ENCODE measurements at regions of chr1 and their contacts with region 1.

Region 1: DNA sequence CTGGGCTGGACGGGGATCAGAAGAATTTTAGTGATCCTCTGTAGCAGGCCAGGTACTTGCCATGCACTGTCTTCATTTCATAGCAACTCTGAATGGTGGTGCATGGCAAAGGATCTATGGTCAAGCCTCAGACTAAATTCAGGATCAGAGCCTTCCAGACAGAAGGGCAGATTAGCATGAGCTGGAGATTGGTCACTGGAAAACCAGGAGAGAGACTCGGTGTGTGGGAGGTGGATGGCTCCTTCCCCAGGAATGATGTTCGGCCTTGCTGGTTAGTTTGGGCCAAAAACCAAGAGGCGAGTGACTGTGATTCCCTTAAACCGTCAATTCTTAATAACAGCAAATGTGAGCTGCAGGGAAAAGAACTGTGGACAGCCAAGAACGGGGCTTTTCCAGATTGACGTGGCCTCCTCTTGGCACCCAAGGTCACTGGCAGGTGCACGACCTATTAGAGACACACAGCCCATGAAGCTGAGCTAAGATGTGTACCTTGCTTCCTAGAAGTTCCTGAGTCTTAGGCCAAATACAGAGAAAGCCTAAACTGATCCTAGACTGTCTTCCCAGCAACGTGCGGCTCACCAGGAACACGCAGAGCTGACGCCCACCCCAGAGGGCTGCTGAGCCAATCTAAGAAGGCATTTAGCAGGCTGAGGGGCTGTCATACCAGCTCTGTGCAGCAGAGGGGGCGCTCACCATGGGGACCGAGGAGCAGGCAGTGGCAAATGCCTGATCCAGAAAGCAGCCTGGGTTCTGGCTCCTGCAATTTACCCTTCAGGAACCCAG is 18.5 kb downstream of the ALDH4A1 start:
- DNase-seq: peak; percentile 86
- H3K4me3 ChIP-seq: no peak overlapping the region; a peak in 1 of 4 replicates
- H3K27ac ChIP-seq: no peak overlapping the region
- H3K4me1 ChIP-seq: peaks cover 4 to 8% of the 10 kb centered on the region in 2 experiments; a peak in 2 of 4 replicates
- H3K27me3 ChIP-seq: no peaks in the 10 kb centered on the region
- CTCF ChIP-seq: peak; percentile 84
- EP300 ChIP-seq: no peak
- RAD21 ChIP-seq: peak; percentile 82

Region 2: DNA sequence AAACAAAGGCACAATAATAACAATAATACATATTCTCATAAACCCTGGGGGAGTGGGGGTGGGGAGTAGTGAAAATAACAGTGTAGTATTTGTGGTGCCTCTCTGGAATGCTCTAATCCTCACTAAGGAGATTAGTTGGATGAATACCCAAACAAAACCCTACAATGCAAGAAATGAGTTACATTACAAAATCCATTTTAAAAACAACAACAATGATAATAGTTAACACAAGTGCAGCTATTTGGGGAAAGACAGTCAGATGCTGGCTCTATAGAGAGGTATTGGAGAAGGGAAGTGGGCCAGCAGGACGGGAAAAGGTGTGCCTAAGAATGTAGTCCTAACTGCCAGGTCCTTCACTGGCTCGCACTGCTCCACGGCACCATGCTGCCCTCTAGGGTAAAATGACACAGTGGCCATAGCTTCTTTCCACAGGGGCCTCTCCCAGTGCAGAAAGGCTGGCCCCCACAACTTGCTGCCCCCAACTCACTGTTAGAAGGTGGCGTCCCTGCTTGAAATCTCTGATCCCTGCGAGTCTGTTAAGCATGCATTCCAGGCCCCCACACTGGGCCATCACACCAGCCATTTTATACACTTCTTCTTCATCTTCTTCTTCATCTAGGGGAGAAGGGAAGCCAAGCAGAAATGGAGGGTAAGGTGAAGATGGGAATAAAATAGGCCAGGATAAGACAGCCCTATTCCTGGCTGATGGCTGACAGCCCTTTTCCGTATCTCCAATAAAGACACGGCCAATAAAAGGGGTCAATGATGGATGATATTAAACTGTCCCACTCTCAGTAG is 212.4 kb after region 1 on chr1:
- CTCF ChIA-PET with region 1: interaction called, 15 read pairs
- POLR2A ChIA-PET with region 1: no interaction called
- DNase-seq: peak; percentile 37
- H3K4me3 ChIP-seq: no peak overlapping the region
- H3K27ac ChIP-seq: no peak overlapping the region
- H3K4me1 ChIP-seq: no peaks in the 10 kb centered on the region
- H3K27me3 ChIP-seq: no peaks in the 10 kb centered on the region
- CTCF ChIP-seq: peak; percentile 49
- EP300 ChIP-seq: no peak
- RAD21 ChIP-seq: peak; percentile 62

Measured in SK-N-SH (cell line).